GM12878 (cell line): ENCODE measurements at regions of chr15 and their contacts with region 1.

Region 1: GRCh38 chr15:36449084-36449661 is 130.3 kb upstream of the CDIN1 start:
- DNase-seq: no peak
- ATAC-seq: no peak
- H3K4me3 ChIP-seq: no peak overlapping the region
- H3K27ac ChIP-seq: no peak overlapping the region
- H3K4me1 ChIP-seq: no peaks in the 10 kb centered on the region
- H3K27me3 ChIP-seq: no peaks in the 10 kb centered on the region
- CTCF ChIP-seq: no peak
- EP300 ChIP-seq: no peak
- POLR2A ChIP-seq: no peak
- RAD21 ChIP-seq: no peak

Region 2: DNA sequence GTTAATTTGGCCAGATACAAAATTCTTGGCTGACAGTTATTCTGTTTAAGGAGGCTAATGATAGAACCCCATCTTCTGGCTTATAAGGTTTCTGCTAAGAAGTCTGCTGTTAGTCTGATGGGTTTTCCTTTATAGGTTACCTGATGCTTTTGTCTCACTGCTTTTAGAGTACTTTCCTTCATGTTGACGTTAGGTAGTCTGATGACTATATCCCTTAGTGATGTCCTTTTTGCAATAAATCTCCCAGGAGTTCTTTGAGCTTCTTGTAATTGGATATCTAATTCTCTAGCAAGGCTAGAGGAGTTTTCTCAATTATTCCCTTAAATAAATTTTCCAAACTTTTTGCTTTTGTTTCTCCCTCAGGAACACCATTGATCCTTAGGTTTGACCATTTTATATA is 16.1 kb after region 1 on chr15:
- CTCF ChIA-PET with region 1: interaction called, 3 read pairs
- POLR2A ChIA-PET with region 1: no interaction called
- RAD21 ChIA-PET with region 1: no interaction called
- SMC1A ChIA-PET with region 1: no interaction called
- in situ Hi-C with region 1: no loop called
- intact Hi-C with region 1: loop called (anchors 2 kb)
- DNase-seq: no peak
- ATAC-seq: no peak
- H3K4me3 ChIP-seq: no peak overlapping the region
- H3K27ac ChIP-seq: no peak overlapping the region
- H3K4me1 ChIP-seq: no peaks in the 10 kb centered on the region
- H3K27me3 ChIP-seq: no peaks in the 10 kb centered on the region
- CTCF ChIP-seq: no peak
- EP300 ChIP-seq: no peak
- POLR2A ChIP-seq: no peak
- RAD21 ChIP-seq: no peak